SK-N-SH (cell line): ENCODE measurements at regions of chr10 and their contacts with region 1.

Region 1: GRCh38 chr10:122213766-122214165 is 57.3 kb upstream of the BTBD16 start:
- DNase-seq: peak; percentile 78
- H3K4me3 ChIP-seq: no peak overlapping the region
- H3K27ac ChIP-seq: peak overlapping the region in 1 of 2 experiments; percentile 83; a peak in 2 of 4 replicates
- H3K4me1 ChIP-seq: peaks cover 0 to 44% of the 10 kb centered on the region in 2 experiments; a peak in 2 of 4 replicates
- H3K27me3 ChIP-seq: no peaks in the 10 kb centered on the region
- CTCF ChIP-seq: no peak
- EP300 ChIP-seq: no peak
- RAD21 ChIP-seq: peak; percentile 74

Region 2: GRCh38 chr10:122163174-122164022 is 50.4 kb before region 1 on chr10:
- CTCF ChIA-PET with region 1: interaction called, 25 read pairs
- POLR2A ChIA-PET with region 1: interaction called, 3 read pairs
- DNase-seq: peak; percentile 83
- H3K4me3 ChIP-seq: peak overlapping the region; percentile 74 to 75
- H3K27ac ChIP-seq: peak overlapping the region in 1 of 2 experiments; percentile 91; a peak in 2 of 4 replicates
- H3K4me1 ChIP-seq: peaks cover 0 to 50% of the 10 kb centered on the region in 2 experiments; a peak in 2 of 4 replicates
- H3K27me3 ChIP-seq: no peaks in the 10 kb centered on the region
- CTCF ChIP-seq: no peak
- EP300 ChIP-seq: no peak
- RAD21 ChIP-seq: no peak

Region 3: DNA sequence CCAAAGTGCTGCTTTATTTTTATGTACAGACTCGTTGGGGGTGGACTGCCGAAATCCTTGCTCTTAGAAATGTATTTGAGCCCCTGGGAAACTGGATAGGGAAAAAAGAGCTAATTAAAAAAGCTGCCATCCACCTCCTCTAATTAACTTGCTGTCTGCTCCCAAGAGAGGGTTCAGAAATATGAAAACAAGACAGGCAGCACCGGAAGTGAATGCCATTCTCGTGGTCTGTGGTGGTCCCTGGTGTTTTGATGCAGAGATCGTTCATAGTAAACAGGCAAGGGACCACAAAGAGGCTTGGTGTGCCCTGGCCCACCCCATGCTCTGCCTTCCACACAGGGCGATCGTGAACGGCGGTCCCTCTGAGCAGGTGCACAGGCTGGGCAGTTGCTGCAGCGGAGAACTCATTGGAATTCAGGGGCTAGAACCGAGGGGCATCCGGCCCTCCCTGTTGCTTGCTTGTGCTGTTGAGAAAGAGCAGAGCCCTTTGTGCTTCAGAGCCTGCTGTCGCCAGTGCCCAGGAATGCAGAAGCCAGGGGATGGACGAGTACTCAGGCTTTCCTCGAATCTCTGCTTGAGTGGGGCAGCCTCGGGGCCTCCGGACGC is 21.7 kb before region 1 on chr10:
- CTCF ChIA-PET with region 1: no interaction called
- POLR2A ChIA-PET with region 1: no interaction called
- DNase-seq: no peak
- H3K4me3 ChIP-seq: no peak overlapping the region
- H3K27ac ChIP-seq: no peak overlapping the region
- H3K4me1 ChIP-seq: peaks cover 0 to 12% of the 10 kb centered on the region in 2 experiments; a peak in 1 of 4 replicates
- H3K27me3 ChIP-seq: no peaks in the 10 kb centered on the region
- CTCF ChIP-seq: no peak
- EP300 ChIP-seq: no peak
- RAD21 ChIP-seq: no peak